H1 (cell line): ENCODE measurements at regions of chr20 and their contacts with region 1.

Region 1: DNA sequence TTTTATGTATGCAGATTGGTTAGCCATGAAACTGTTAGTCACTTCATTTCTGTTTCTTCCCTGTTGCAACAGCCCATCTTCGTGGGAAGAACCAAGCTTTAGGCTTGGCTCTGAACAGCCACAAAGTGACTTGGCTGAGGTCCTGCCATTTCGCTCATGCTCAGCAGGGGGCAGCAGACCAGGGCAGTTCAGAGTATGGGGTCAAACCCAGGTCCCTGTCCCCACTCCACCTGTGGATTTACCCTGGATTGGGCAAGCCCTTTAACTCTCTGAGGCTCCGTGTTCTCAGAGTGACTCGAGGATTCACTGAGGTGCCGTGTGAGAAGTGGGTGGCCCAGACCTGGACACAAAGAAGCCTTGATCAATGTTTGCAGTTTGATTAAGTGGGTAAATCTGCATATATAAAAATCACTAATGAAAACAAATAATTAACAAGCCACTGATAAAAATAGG is 19.8 kb upstream of the MAP1LC3A start:
- DNase-seq: peak in 1 of 2 experiments; percentile 82
- H3K4me3 ChIP-seq: no peak overlapping the region
- H3K27ac ChIP-seq: no peak overlapping the region
- H3K4me1 ChIP-seq: peaks cover 0 to 2% (median 0%) of the 10 kb centered on the region in 4 experiments; a peak in 3 of 7 replicates
- H3K27me3 ChIP-seq: no peaks in the 10 kb centered on the region
- CTCF ChIP-seq: peak; percentile 71 to 87 (median 83)
- EP300 ChIP-seq: no peak
- POLR2A ChIP-seq: no peak
- RAD21 ChIP-seq: peak; percentile 58 to 68

Region 2: GRCh38 chr20:34549291-34549928 is 10.7 kb after region 1 on chr20:
- CTCF ChIA-PET with region 1: interaction called, 24 read pairs
- POLR2A ChIA-PET with region 1: interaction called, 4 read pairs
- DNase-seq: peak in 1 of 2 experiments; percentile 64
- H3K4me3 ChIP-seq: no peak overlapping the region
- H3K27ac ChIP-seq: no peak overlapping the region
- H3K4me1 ChIP-seq: peaks cover 0 to 14% (median 2%) of the 10 kb centered on the region in 4 experiments; a peak in 4 of 7 replicates
- H3K27me3 ChIP-seq: no peaks in the 10 kb centered on the region
- CTCF ChIP-seq: no peak
- EP300 ChIP-seq: no peak
- POLR2A ChIP-seq: peak in 1 of 2 experiments; percentile 52; a peak in 2 of 3 replicates
- RAD21 ChIP-seq: no peak